Activated CD8-positive, alpha-beta T cell treated with anti-CD3 and anti-CD28 coated beads for 36 hours (primary cell): ENCODE measurements at regions of chr14 and their contacts with region 1.

Region 1: DNA sequence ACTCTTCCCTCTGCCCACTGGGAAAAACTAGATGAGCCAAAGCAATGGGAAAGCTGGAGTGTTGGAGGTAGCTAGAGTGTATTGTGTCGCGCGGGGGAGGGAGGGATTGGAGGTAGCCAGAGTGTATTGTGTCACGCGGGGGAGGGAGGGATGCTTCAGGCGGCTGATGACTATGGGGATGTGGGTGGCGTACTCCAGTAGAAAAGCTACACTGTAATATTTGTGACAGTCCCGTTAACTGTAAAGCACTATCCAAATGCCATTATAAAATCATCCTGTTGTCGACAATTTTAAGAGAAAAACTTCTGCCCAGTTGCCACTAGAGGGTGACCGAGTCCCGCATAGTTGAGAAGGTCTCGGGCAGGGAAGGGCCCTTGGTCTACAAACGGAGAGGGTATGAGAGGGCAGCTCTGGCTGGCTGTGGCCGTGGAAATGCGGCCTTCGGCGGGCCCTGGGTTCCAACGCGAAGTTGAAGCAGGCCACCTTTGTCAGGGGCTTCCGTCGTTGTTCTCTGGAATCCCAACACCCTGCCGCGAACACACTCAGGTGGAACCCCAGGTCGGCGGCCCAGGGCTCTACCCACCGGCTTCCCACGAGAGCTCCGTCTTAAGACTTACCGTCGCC is 15.1 kb upstream of the PLEK2 start:
- DNase-seq: peak; percentile 79
- ATAC-seq: peak; percentile 97
- H3K4me3 Mint-ChIP-seq: no peak overlapping the region
- H3K27ac Mint-ChIP-seq: no peak overlapping the region
- H3K4me1 Mint-ChIP-seq: no peaks in the 10 kb centered on the region
- H3K27me3 Mint-ChIP-seq: peaks cover 20% of the 10 kb centered on the region
- CTCF ChIP-seq: peak; percentile 75

Region 2: DNA sequence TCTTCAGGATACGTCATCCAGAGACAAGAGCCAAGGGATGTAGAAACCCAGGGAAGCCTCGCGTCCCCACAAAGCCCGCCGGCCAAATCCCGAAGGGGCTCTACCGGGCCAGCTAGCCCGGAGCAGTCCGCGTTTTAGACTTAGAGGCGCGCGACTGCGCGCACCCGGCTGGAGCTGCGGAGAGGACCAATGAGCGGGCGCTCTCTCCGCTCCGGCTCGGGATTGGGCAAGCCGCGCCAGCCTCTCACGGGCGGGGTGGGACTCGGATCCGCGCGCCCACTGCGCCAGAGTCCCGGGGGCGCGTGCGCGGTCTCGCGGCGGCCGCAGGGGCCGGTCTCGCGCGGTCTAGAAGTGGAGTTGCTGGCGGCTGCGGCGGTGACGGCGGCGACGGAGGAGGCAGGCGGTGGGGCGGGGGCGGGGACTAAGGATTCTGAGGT is 186.1 kb before region 1 on chr14:
- CTCF ChIA-PET with region 1: no interaction called
- POLR2A ChIA-PET with region 1: no interaction called
- intact Hi-C with region 1: no loop called
- DNase-seq: peak; percentile 96
- ATAC-seq: peak; percentile 96
- H3K4me3 Mint-ChIP-seq: peak overlapping the region; percentile 82
- H3K27ac Mint-ChIP-seq: peak overlapping the region; percentile 87
- H3K4me1 Mint-ChIP-seq: peaks cover 20% of the 10 kb centered on the region
- H3K27me3 Mint-ChIP-seq: peaks cover 9% of the 10 kb centered on the region
- CTCF ChIP-seq: no peak

Region 3: GRCh38 chr14:67392800-67393199 is 34.3 kb before region 1 on chr14:
- CTCF ChIA-PET with region 1: no interaction called
- POLR2A ChIA-PET with region 1: no interaction called
- intact Hi-C with region 1: no loop called
- DNase-seq: no peak
- ATAC-seq: no peak
- H3K4me3 Mint-ChIP-seq: no peak overlapping the region
- H3K27ac Mint-ChIP-seq: no peak overlapping the region
- H3K4me1 Mint-ChIP-seq: no peaks in the 10 kb centered on the region
- H3K27me3 Mint-ChIP-seq: no peaks in the 10 kb centered on the region
- CTCF ChIP-seq: no peak

Region 4: GRCh38 chr14:67413801-67414769 is 13.0 kb before region 1 on chr14:
- CTCF ChIA-PET with region 1: interaction called, 34 read pairs
- POLR2A ChIA-PET with region 1: no interaction called
- intact Hi-C with region 1: no loop called
- DNase-seq: peak; percentile 62
- ATAC-seq: peak; percentile 86
- H3K4me3 Mint-ChIP-seq: no peak overlapping the region
- H3K27ac Mint-ChIP-seq: no peak overlapping the region
- H3K4me1 Mint-ChIP-seq: peaks cover 14% of the 10 kb centered on the region
- H3K27me3 Mint-ChIP-seq: peaks cover 17% of the 10 kb centered on the region
- CTCF ChIP-seq: no peak

Region 5: GRCh38 chr14:67467179-67468080 is 40.3 kb after region 1 on chr14:
- CTCF ChIA-PET with region 1: interaction called, 10 read pairs
- POLR2A ChIA-PET with region 1: no interaction called
- intact Hi-C with region 1: no loop called
- DNase-seq: no peak
- ATAC-seq: no peak
- H3K4me3 Mint-ChIP-seq: no peak overlapping the region
- H3K27ac Mint-ChIP-seq: no peak overlapping the region
- H3K4me1 Mint-ChIP-seq: peaks cover 27% of the 10 kb centered on the region
- H3K27me3 Mint-ChIP-seq: no peaks in the 10 kb centered on the region
- CTCF ChIP-seq: no peak

Region 6: DNA sequence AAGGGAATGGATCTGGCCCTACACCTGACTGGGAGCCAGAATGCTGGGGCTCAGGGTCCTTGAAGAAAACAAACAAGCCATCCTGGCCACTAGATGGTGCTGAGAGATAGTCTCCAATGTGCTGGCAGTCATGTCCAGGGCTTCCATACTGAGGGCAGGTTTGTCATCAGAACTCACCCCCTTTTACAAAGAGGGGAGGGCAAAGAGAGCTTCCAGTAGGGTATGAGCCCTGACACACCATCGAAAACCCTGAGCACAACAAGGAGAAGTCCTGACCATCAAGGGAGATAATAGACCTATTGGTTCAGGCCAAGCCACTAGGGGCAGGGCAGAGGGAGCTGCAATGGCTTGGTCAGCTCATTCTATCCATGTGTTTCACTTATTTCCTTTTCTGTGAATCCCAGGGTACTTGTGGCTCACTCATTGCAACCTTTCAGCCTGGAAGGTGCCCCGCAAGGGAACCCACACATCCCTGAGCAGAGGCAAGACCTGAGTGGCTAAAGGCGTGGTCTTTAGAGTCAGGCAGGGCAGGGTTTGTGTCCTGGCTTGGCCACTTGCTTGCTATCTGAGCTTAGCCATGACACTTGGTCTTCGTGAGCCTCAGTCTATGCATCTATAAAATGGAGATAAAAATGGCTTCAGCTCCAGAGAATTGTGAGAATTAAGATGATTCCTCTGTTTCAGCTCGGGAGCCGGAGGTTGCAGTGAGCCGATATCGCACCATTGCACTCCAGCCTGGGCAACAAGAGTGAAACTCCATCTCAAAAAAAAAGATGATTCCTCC is 99.8 kb after region 1 on chr14:
- CTCF ChIA-PET with region 1: interaction called, 48 read pairs
- POLR2A ChIA-PET with region 1: interaction called, 3 read pairs
- intact Hi-C with region 1: loop called (anchors 5 kb)
- DNase-seq: peak; percentile 65
- ATAC-seq: peak; percentile 94
- H3K4me3 Mint-ChIP-seq: no peak overlapping the region
- H3K27ac Mint-ChIP-seq: no peak overlapping the region
- H3K4me1 Mint-ChIP-seq: no peaks in the 10 kb centered on the region
- H3K27me3 Mint-ChIP-seq: peaks cover 19% of the 10 kb centered on the region
- CTCF ChIP-seq: peak; percentile 71

Region 7: DNA sequence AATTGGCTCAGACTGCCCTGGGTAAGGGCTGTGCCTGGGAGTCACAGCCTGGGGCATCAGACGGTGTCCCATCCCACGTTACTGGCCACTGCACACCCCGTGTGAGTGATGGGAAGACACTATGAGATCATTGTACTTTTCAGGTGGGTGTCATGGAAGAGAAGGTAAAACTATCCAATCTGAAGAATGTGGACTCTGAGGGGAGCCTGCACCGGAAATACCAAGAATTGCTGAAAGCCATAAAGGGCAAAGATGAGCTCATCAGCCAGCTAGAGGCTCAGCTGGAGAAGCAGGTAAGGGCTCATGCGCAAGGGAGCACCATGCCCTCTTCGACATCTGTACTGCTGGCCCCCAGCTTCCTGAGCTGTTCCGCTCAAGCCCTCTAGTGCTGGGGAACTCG is 130.0 kb after region 1 on chr14:
- CTCF ChIA-PET with region 1: interaction called, 14 read pairs
- POLR2A ChIA-PET with region 1: no interaction called
- intact Hi-C with region 1: no loop called
- DNase-seq: peak; percentile 34
- ATAC-seq: peak; percentile 82
- H3K4me3 Mint-ChIP-seq: no peak overlapping the region
- H3K27ac Mint-ChIP-seq: no peak overlapping the region
- H3K4me1 Mint-ChIP-seq: peaks cover 3% of the 10 kb centered on the region
- H3K27me3 Mint-ChIP-seq: no peaks in the 10 kb centered on the region
- CTCF ChIP-seq: no peak

Region 8: GRCh38 chr14:67666750-67667449 is 239.8 kb after region 1 on chr14:
- CTCF ChIA-PET with region 1: interaction called, 7 read pairs
- POLR2A ChIA-PET with region 1: no interaction called
- intact Hi-C with region 1: loop called (anchors 10 kb)
- DNase-seq: peak; percentile 44
- ATAC-seq: peak; percentile 87
- H3K4me3 Mint-ChIP-seq: no peak overlapping the region
- H3K27ac Mint-ChIP-seq: peak overlapping the region; percentile 61
- H3K4me1 Mint-ChIP-seq: peaks cover 53% of the 10 kb centered on the region
- H3K27me3 Mint-ChIP-seq: no peaks in the 10 kb centered on the region
- CTCF ChIP-seq: peak; percentile 47

Region 9: DNA sequence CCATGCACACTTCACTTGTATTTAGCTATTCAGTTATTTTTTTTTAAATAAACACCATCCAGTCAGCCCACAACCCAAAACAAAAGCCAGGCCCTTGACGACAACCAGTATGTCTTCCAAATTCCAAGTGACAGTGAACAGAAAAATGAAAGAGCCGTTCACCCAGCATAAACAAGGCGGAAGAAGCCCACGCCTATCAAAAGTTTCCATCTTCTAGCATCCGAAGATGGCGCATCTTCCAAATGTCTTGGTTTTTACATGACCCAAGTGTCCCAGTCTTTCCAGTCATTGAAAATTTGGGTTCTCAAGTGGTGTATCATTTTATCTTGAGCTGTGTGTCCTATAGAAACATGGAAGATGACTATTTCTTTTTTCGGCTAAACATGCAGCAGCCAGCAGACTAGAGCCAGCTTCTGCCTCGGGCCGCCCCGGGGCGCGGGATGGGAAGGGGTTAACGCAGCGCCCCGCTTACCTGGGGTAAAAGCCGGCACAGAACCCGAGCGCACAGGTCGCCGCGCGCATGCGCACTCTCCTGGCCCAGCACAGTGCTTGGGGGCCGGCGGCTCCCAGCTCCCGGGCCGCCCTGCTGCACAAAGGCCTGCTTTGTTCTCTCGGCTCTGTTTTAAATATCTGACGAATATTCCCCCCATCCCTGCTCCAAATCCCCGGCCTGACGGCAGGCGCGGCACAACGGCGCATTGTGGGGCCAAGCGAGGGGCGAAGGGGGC is 1200.9 kb after region 1 on chr14:
- CTCF ChIA-PET with region 1: no interaction called
- POLR2A ChIA-PET with region 1: no interaction called
- intact Hi-C with region 1: no loop called
- DNase-seq: peak; percentile 61
- ATAC-seq: peak; percentile 80
- H3K4me3 Mint-ChIP-seq: peak overlapping the region; percentile 57
- H3K27ac Mint-ChIP-seq: no peak overlapping the region
- H3K4me1 Mint-ChIP-seq: peaks cover 19% of the 10 kb centered on the region
- H3K27me3 Mint-ChIP-seq: peaks cover 4% of the 10 kb centered on the region
- CTCF ChIP-seq: no peak